PC-9 (cell line): ENCODE measurements at regions of chr4 and their contacts with region 1.

Region 1: DNA sequence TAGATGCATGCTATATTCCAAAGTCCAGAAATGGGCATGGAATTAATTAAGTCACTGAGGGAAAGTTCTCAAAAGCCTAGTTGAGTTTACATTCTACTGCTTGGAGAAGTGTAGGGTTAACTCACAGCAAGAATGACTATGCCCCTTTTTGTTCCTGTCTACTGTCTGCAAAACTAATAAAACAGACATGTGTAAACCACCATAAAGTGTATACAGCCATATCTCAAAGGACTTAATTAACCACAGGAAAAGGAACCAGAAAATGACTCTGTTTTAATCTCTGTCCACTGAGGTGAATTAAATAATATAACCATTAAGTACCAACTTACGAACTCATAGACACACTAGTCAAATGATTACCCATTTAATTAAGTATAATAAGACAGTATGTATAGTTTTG is 84.9 kb downstream of the PRDM5 start:
- DNase-seq: no peak
- H3K4me3 ChIP-seq: no peak overlapping the region
- H3K27ac ChIP-seq: no peak overlapping the region
- H3K4me1 ChIP-seq: no peaks in the 10 kb centered on the region
- H3K27me3 ChIP-seq: no peaks in the 10 kb centered on the region
- CTCF ChIP-seq: no peak

Region 2: GRCh38 chr4:120293341-120293740 is 544.3 kb before region 1 on chr4:
- CTCF ChIA-PET with region 1: no interaction called
- POLR2A ChIA-PET with region 1: no interaction called
- intact Hi-C with region 1: no loop called
- DNase-seq: no peak
- H3K4me3 ChIP-seq: no peak overlapping the region
- H3K27ac ChIP-seq: no peak overlapping the region
- H3K4me1 ChIP-seq: no peaks in the 10 kb centered on the region
- H3K27me3 ChIP-seq: no peaks in the 10 kb centered on the region
- CTCF ChIP-seq: no peak

Region 3: DNA sequence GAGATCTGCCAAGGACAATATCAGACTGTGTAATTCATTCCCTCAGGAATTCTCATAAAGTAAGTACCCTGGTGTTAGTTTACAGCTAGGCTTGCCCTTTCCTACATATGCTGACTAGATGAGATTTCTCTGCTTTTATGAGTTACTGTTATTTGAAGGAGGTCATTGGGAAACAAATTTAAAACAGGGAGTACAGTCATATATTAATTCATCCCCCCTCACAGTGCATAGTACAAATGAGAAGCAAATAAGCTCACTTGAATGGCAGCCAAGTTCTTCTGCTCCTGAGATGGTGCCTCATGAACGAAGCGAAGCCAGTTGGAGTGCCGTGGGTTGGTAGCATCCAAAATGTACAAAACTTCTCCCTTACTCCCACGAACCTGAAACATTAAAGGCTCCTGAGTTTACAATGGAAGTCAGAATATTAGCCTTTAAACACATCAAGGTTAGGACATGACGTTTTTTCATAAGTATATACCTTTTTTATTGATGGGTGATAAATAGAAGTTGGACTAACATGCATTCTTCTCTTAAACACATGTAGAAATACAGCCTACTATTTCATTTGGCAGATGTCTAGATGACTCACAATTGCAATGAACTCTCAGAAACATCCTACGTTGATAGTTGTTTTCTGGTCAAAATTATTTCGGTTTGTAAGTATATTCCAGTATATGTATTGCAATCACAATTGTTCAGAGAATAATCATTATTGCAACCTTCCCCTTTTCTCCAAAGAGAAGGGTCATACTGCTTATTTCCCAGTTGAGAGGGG is 15.7 kb after region 1 on chr4:
- CTCF ChIA-PET with region 1: no interaction called
- POLR2A ChIA-PET with region 1: interaction called, 14 read pairs
- intact Hi-C with region 1: no loop called
- DNase-seq: no peak
- H3K4me3 ChIP-seq: no peak overlapping the region
- H3K27ac ChIP-seq: no peak overlapping the region
- H3K4me1 ChIP-seq: no peaks in the 10 kb centered on the region
- H3K27me3 ChIP-seq: no peaks in the 10 kb centered on the region
- CTCF ChIP-seq: no peak